ENCODE measurements at regions of chr11 and their contacts with region 1.

Region 1: DNA sequence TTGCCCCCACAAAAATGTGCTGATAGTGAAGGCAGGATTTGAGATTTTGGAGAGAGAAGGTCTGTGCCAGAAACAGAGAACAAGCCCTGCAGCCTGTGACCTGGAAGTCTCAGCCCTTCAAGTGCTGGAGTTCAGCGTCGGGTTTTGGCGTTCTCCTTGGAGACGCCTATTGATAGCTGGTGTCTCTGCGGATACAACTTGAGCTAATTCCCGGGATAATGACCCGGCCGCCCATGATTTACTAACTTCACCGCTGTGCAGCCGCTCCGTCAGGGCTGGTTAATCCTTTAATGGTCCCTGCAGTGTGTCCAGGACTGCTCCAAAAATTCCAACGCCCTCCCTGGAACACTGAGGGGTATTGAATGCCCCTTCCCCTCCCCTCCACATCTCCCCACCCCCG is 76.6 kb downstream of the WT1 start:
- DNase-seq: no peak
- ATAC-seq: no peak
- H3K4me3 ChIP-seq: no peak overlapping the region
- H3K27ac ChIP-seq: no peak overlapping the region
- H3K4me1 ChIP-seq: no peaks in the 10 kb centered on the region
- H3K27me3 ChIP-seq: peaks cover 4% of the 10 kb centered on the region; the same call in 1 of the 2 replicates
- CTCF ChIP-seq: no peak
- POLR2A ChIP-seq: no peak
- RAD21 ChIP-seq: no peak

Region 2: DNA sequence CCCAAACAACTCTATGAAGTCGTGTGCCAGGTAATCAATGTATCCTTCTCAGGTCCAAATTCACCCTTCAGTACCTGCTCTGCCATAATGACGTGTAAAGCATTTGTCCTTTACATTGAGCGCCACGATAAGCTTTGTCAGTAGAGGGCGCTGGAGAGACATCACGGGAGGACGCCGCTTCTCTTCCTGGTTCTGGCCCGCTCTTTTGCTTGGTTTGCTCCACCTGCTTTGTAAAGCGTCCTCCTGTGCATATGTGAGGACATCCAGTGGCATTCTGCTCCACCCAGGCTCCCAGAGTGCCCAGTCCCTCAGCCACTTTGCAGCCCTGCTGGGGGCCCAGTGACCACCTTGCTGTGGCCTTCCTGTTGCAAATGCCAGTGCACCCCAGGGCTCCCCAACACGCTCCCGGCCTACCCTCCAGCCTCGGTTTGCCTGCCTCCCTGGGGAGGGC is 15.6 kb after region 1 on chr11:
- CTCF ChIA-PET with region 1: no interaction called
- POLR2A ChIA-PET with region 1: no interaction called
- RAD21 ChIA-PET with region 1: no interaction called
- intact Hi-C with region 1: loop called (anchors 1 kb)
- DNase-seq: peak; percentile 19
- ATAC-seq: peak; percentile 89
- H3K4me3 ChIP-seq: no peak overlapping the region
- H3K27ac ChIP-seq: no peak overlapping the region
- H3K4me1 ChIP-seq: no peaks in the 10 kb centered on the region
- H3K27me3 ChIP-seq: no peaks in the 10 kb centered on the region
- CTCF ChIP-seq: peak; percentile 26 to 84 (median 75); a peak in 5 of 6 replicates
- POLR2A ChIP-seq: no peak
- RAD21 ChIP-seq: peak; percentile 46

Measured in HCT116 (cell line).